ENCODE measurements at regions of chr7 and their contacts with region 1.

Region 1: DNA sequence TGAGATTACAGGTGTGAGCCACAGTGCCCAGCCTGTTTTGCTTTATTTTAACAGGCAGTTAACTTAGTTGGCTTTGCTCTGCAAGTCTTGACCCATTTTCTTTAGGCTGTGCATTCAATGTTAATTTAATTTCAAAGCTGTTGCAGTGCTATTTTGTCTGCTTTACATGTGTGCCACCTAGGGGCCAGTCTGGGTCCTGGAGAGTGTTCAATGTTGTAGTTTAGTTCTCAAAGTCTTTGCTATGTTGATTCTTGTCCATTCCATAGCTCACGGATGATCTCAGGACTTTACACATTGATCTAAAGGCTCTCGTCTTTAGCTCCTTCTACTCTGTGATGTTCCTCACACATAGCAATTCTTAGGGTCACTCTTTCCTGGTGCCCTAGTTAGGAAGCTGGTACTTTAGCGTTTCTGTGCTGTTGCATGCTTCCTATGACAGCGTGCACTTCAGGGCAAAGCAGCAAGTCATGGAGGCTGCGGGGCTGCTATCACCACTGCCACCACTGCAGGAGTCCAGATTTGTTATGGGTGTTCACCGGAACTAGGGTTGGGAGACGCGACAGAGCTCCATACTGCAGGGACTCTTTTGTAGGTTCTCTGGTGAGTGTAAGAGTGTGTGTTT is 16.4 kb upstream of the ABCA13 start:
- DNase-seq: peak; percentile 52 to 73 (median 58)
- ATAC-seq: peak; percentile 78
- H3K4me3 ChIP-seq: no peak overlapping the region
- H3K27ac ChIP-seq: no peak overlapping the region
- H3K4me1 ChIP-seq: peaks cover 5% of the 10 kb centered on the region
- H3K27me3 ChIP-seq: no peaks in the 10 kb centered on the region
- CTCF ChIP-seq: peak; percentile 57 to 83 (median 72)
- POLR2A ChIP-seq: no peak

Region 2: GRCh38 chr7:47710201-47710935 is 444.5 kb before region 1 on chr7:
- intact Hi-C with region 1: no loop called
- DNase-seq: no peak
- ATAC-seq: no peak
- H3K4me3 ChIP-seq: no peak overlapping the region
- H3K27ac ChIP-seq: no peak overlapping the region
- H3K4me1 ChIP-seq: no peaks in the 10 kb centered on the region
- H3K27me3 ChIP-seq: no peaks in the 10 kb centered on the region
- CTCF ChIP-seq: no peak
- POLR2A ChIP-seq: no peak

Region 3: GRCh38 chr7:47941136-47941844 is 213.6 kb before region 1 on chr7:
- intact Hi-C with region 1: loop called (anchors 5 kb)
- DNase-seq: peak in 1 of 4 donors; percentile 45
- ATAC-seq: peak; percentile 57
- H3K4me3 ChIP-seq: no peak overlapping the region
- H3K27ac ChIP-seq: peak overlapping the region in 3 of 4 donors; percentile 5 to 63 (median 13)
- H3K4me1 ChIP-seq: no peaks in the 10 kb centered on the region
- H3K27me3 ChIP-seq: no peaks in the 10 kb centered on the region
- CTCF ChIP-seq: no peak
- POLR2A ChIP-seq: no peak

Region 4: DNA sequence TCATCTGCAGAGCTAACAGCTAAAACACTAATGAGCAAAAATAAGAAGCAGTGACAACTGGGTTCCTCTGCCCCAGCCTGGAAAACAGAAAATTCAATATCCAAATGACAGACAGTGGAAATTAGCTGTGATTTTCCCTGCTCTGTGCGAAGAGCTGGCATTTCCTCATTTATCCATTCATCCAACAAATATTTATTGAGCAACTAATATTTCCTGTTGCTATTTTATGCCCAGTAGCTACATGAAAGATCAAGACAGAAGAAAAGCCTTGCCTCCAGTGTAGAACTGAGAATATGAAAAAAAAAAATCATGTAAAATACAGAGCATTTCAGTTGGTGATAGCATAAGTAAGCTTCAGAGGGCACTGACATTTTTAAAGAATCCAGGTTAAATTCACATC is 157.2 kb after region 1 on chr7:
- intact Hi-C with region 1: no loop called
- DNase-seq: no peak
- ATAC-seq: no peak
- H3K4me3 ChIP-seq: no peak overlapping the region
- H3K27ac ChIP-seq: no peak overlapping the region
- H3K4me1 ChIP-seq: no peaks in the 10 kb centered on the region
- H3K27me3 ChIP-seq: no peaks in the 10 kb centered on the region
- CTCF ChIP-seq: no peak
- POLR2A ChIP-seq: no peak

Region 5: GRCh38 chr7:48411619-48412018 is 256.7 kb after region 1 on chr7:
- intact Hi-C with region 1: no loop called
- DNase-seq: no peak
- ATAC-seq: no peak
- H3K4me3 ChIP-seq: no peak overlapping the region
- H3K27ac ChIP-seq: no peak overlapping the region
- H3K4me1 ChIP-seq: no peaks in the 10 kb centered on the region
- H3K27me3 ChIP-seq: no peaks in the 10 kb centered on the region
- CTCF ChIP-seq: no peak
- POLR2A ChIP-seq: no peak